Adrenal gland (tissue), 19 donors: ENCODE measurements at regions of chr1 and their contacts with region 1.

Region 1: DNA sequence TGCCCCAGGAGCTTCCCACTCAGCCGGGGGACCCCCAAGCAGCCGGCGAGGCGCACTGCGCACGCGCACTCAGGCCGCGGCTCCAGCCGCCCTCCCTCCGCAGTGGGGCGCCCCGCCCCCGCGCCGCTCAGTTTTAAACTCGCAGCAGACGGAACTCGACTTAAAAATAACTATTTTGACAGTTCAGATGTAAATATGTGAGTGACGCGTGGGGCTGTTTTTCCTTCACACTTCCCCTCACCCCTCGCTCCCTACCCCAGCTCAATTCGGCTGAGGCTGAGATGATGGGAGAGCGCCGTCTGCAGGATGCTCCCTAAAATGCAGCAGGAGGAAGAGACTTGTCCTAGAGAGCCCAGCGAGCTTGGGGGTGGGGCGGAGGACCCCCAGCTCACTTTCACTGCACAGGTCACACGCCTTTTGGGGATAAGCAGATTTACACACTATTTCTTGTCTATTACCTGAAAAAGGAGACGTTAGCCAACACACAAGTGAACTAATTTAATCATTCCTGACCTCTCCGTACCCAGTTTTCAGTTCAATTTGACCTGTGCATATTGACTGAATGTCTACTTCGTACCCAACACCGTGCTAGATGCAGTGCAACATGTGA is 8.9 kb upstream of the LEMD1 start:
- DNase-seq: peak; percentile 52 to 84 (median 68)
- H3K4me3 ChIP-seq: peak overlapping the region in 3 of 4 donors; percentile 7 to 50 (median 8)
- H3K27ac ChIP-seq: no peak overlapping the region
- H3K4me1 ChIP-seq: peaks cover 0 to 4% of the 10 kb centered on the region in 2 donors
- H3K27me3 ChIP-seq: no peaks in the 10 kb centered on the region
- CTCF ChIP-seq: peak; percentile 78 to 91 (median 85)
- POLR2A ChIP-seq: no peak

Region 2: DNA sequence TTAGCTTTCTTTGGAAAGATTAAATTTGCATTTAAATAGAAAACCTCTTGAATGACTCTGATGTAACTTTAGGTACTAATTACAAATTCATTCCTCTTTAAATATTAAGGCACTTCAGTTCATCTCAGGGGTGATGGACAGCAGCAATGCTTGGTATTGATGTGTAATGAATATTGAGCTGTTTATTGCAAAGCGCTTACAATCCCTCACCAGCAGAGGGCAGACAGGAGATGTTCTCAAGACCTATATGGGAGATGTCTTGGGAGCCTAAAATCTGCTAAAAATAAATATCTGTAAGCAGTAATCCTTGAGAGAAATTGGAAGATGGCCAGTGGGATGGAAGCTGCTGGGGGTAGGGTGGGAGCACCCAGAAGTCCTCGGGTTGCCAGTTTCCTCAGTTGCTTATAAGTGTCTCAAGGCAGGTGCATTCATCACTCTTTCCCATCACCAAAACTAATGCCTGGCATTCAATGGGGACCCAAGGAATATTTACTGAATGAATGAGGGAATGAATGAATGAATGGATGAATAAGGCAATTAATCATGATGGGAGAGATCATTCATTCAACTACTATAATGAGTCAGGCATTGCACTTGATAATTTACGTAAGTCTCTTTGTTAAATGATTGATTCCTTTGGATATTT is 76.4 kb before region 1 on chr1:
- intact Hi-C with region 1: loop called (anchors 2 to 5 kb)
- DNase-seq: peak; percentile 63 to 91 (median 75)
- H3K4me3 ChIP-seq: no peak overlapping the region
- H3K27ac ChIP-seq: peak overlapping the region in 2 of 5 donors; percentile 46 to 69
- H3K4me1 ChIP-seq: peaks cover 25 to 27% of the 10 kb centered on the region in 2 donors
- H3K27me3 ChIP-seq: no peaks in the 10 kb centered on the region
- CTCF ChIP-seq: peak; percentile 59 to 90 (median 86)
- POLR2A ChIP-seq: no peak